A673 (cell line): ENCODE measurements at regions of chr19 and their contacts with region 1.

Region 1: GRCh38 chr19:40603389-40604135 is 2.4 kb downstream of the LTBP4 start:
- DNase-seq: peak; percentile 76
- H3K4me3 ChIP-seq: peak overlapping the region; percentile 61
- H3K27ac ChIP-seq: peak overlapping the region; percentile 94
- H3K4me1 ChIP-seq: peaks cover 46% of the 10 kb centered on the region
- H3K27me3 ChIP-seq: no peaks in the 10 kb centered on the region
- CTCF ChIP-seq: no peak; the same call in 1 of the 2 replicates

Region 2: GRCh38 chr19:40444192-40445028 is 159.2 kb before region 1 on chr19 and contains the start of gene SERTAD3:
- CTCF ChIA-PET with region 1: interaction called, 3 read pairs
- POLR2A ChIA-PET with region 1: no interaction called
- intact Hi-C with region 1: loop called (anchors 5 kb)
- DNase-seq: peak; percentile 98
- H3K4me3 ChIP-seq: peak within 1 kb of the TSS; percentile 82
- H3K27ac ChIP-seq: peak within 1 kb of the TSS; percentile 96
- H3K4me1 ChIP-seq: peaks cover 22% of the 10 kb centered on the region
- H3K27me3 ChIP-seq: no peaks in the 10 kb centered on the region
- CTCF ChIP-seq: peak; percentile 52
- total RNA-seq, gene SERTAD3: 26.3 and 28.7 TPM in 2 replicates

Region 3: DNA sequence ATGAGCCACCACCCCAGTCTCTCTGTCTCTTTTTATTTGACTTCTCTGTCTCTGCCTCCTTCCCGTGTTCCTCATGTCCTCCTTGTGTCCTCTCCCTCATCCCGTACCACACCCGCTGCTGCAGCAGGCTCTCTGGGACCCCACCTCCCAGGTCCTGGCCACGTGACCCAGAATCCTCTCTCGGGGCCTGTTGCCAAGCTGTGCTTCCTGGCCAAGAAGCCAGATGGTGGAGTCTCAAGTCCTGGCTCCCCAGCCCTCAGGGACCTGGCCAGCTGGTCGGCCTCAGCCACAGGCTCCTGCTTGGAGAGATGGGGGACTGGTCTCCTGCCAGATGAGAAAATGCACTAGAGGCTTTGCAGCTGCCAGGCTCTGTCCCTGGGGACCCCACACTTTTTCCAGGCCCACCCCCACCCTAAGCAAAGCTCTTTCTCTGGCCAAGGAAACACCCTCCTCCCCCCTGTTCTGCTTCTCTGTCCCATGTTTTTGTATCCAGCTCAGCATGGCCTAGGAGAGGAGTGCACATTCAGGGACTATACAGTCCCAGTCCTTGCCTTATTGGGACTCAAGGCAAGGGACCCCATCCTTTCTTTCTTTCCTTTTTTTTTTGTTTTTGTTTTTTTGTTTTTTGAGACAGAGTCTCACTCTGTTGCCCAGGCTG is 61.2 kb before region 1 on chr19:
- CTCF ChIA-PET with region 1: interaction called, 13 read pairs
- POLR2A ChIA-PET with region 1: no interaction called
- intact Hi-C with region 1: no loop called
- DNase-seq: peak; percentile 40
- H3K4me3 ChIP-seq: no peak overlapping the region
- H3K27ac ChIP-seq: no peak overlapping the region
- H3K4me1 ChIP-seq: peaks cover 8% of the 10 kb centered on the region
- H3K27me3 ChIP-seq: no peaks in the 10 kb centered on the region
- CTCF ChIP-seq: no peak

Region 4: GRCh38 chr19:40549007-40549708 is 54.4 kb before region 1 on chr19:
- CTCF ChIA-PET with region 1: interaction called, 15 read pairs
- POLR2A ChIA-PET with region 1: no interaction called
- intact Hi-C with region 1: loop called (anchors 1 kb)
- DNase-seq: peak; percentile 85
- H3K4me3 ChIP-seq: peak overlapping the region; percentile 18
- H3K27ac ChIP-seq: no peak overlapping the region
- H3K4me1 ChIP-seq: peaks cover 3% of the 10 kb centered on the region
- H3K27me3 ChIP-seq: no peaks in the 10 kb centered on the region
- CTCF ChIP-seq: peak; percentile 60

Region 5: DNA sequence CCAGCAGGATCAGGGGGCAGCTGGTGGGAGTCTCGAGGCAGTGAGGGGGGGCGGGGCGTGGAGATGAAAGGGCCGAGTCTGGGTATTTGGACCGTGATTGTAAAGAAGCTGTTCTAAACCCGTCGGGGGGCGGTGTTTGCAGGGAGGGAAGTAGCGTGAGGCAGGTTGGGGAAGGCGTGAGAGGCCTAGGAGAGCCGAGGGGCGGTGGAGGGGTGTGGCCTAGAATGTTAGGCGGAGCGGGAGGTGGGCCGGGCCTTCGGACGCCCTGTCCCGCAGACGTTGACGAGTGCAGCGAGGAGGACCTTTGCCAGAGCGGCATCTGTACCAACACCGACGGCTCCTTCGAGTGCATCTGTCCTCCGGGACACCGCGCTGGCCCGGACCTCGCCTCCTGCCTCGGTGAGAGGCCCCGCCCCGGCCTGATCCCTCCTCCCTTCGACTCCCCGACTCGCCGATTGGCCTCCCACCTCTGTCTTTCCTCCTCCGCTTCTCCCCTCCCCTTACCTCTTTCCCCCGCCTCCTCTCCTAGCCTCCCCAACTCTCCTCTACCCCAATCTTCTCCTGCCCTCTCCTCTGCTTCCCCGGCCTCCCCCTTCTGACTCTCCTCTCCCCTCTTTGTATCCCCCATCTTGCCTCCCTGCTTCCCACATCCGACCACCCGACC is 10.2 kb after region 1 on chr19:
- CTCF ChIA-PET with region 1: interaction called, 11 read pairs
- POLR2A ChIA-PET with region 1: interaction called, 3 read pairs
- intact Hi-C with region 1: loop called (anchors 1 kb)
- DNase-seq: peak; percentile 94
- H3K4me3 ChIP-seq: peak overlapping the region; percentile 80
- H3K27ac ChIP-seq: peak overlapping the region; percentile 94
- H3K4me1 ChIP-seq: peaks cover 30% of the 10 kb centered on the region
- H3K27me3 ChIP-seq: no peaks in the 10 kb centered on the region
- CTCF ChIP-seq: no peak

Region 6: DNA sequence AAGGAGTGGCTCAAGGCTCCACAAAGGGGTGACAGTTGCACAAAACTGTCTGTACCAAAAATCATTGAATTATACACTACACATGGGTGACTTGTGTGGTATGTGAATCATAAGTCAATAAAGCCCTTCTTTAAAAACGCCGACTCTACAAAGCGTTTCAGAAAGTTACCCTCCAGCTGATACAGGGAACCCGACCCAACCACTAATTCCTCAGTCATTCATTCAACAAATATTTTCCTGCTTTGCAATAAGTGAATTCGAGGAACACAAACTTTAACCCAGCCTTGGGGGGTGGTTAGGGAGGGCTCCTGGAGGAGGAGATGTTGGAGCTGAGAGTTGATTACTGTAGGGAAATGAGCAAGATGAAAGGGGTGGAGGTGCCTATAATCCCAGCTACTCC is 29.6 kb after region 1 on chr19:
- CTCF ChIA-PET with region 1: interaction called, 14 read pairs
- POLR2A ChIA-PET with region 1: no interaction called
- intact Hi-C with region 1: loop called (anchors 1 kb)
- DNase-seq: no peak
- H3K4me3 ChIP-seq: no peak overlapping the region
- H3K27ac ChIP-seq: no peak overlapping the region
- H3K4me1 ChIP-seq: no peaks in the 10 kb centered on the region
- H3K27me3 ChIP-seq: no peaks in the 10 kb centered on the region
- CTCF ChIP-seq: no peak

Region 7: DNA sequence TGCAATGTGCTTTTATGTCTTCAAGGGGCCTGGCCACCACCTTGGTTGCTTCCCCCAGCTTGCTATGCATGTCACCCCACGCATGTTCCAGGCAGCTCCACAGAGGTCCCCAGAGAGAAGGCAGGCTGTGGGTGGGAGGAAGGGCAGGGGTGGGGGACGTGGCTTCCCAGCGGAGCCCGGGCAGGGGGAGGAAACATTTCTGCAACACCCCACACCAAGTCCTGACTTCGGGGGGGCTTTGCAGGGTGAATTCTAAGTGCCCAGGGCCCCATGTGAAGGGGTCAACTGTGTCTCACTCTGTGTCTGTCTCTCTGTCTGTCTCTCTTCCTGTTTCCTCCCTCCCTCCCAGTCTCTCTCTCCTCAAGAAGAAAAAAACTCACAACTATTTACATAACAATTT is 37.2 kb after region 1 on chr19:
- CTCF ChIA-PET with region 1: interaction called, 14 read pairs
- POLR2A ChIA-PET with region 1: no interaction called
- intact Hi-C with region 1: no loop called
- DNase-seq: no peak
- H3K4me3 ChIP-seq: no peak overlapping the region
- H3K27ac ChIP-seq: no peak overlapping the region
- H3K4me1 ChIP-seq: peaks cover 13% of the 10 kb centered on the region
- H3K27me3 ChIP-seq: no peaks in the 10 kb centered on the region
- CTCF ChIP-seq: no peak